ENCODE measurements at regions of chr6 and their contacts with region 1.

Region 1: GRCh38 chr6:159174263-159174969 is 5.2 kb downstream of the FNDC1 start:
- DNase-seq: peak; percentile 18
- H3K4me3 ChIP-seq: no peak overlapping the region
- H3K27ac ChIP-seq: no peak overlapping the region
- H3K27me3 ChIP-seq: peaks cover 31% of the 10 kb centered on the region
- CTCF ChIP-seq: peak; percentile 99

Region 2: DNA sequence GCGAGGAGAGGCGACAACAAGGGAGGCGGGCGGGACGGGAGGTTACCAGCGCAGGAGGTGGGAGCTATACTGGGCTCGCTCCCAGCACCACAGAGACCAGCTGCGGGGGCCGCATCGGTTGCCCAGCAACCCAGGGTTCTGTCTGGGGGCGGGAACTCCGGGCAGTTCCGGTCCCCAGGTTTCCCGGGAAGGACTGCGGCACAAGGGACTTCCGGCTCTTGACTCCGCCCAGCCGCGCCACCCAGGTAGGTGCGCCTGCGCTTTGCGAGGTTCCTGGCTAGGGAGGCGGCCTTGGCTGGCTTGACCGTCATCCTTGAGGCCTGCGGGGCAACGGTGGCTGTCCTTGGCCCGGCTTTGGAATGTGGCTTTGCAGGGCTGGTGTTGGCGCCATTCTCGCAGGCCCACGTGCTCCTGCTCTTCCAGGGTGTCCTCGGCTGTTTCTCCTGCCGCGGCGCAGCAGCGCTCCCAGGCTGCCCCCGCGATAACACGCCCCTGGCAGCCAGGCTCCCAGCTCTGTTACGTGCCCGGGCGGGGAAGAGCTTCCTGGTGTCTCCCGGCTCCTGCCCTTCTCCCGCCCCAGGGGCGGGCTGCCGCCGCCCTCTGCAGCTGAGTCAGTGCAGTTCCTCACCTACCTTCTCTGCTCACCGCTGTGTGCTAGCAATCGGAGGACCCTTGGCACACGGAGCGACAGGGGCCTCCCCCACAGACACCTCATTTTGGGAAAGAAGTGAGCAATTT is 174.6 kb before region 1 on chr6 and contains the start of gene RSPH3:
- CTCF ChIA-PET with region 1: no interaction called
- POLR2A ChIA-PET with region 1: no interaction called
- DNase-seq: peak; percentile 72
- H3K4me3 ChIP-seq: peak within 1 kb of the TSS; percentile 95
- H3K27ac ChIP-seq: peak within 1 kb of the TSS; percentile 82
- H3K27me3 ChIP-seq: no peaks in the 10 kb centered on the region
- CTCF ChIP-seq: no peak
- polyA plus RNA-seq, gene RSPH3: 1.6 and 2.0 TPM in 2 replicates

Region 3: GRCh38 chr6:159184559-159184958 is 10.1 kb after region 1 on chr6:
- CTCF ChIA-PET with region 1: interaction called, 17 read pairs
- POLR2A ChIA-PET with region 1: no interaction called
- DNase-seq: no peak
- H3K4me3 ChIP-seq: no peak overlapping the region
- H3K27ac ChIP-seq: no peak overlapping the region
- H3K27me3 ChIP-seq: no peaks in the 10 kb centered on the region
- CTCF ChIP-seq: no peak

Region 4: DNA sequence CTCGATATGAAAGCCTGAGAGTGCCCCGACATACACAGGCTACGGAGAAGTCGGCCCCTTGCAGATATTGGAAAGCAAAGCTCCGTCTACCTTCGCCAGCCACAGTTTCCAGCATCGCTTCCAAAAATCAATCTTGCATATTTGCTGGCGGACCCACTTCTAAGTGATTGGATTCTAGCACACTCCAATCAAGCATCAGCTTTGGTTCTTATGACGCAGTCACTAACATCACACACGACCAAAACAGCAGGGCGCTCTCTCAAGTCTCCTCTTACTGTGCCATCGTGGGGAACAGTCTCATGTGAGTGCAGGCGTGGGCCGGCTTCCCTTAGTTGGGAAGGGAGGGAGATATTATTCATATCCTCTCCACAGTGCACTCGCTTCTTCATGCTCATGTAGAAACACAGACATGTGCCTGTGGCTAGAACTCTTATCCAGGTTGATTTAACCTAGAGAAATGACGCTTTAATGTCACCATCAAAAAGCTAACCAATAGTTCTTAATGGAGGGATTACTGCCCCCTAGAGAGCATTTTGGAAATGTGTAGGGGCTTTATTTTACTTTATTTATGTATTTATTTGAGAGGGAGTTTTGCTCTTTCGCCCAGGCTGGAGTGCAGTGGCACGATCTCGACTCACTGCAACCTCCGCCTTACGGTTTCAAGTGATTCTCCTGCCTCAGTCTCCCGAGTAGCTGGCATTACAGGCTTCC is 288.9 kb after region 1 on chr6:
- CTCF ChIA-PET with region 1: interaction called, 11 read pairs
- POLR2A ChIA-PET with region 1: no interaction called
- DNase-seq: no peak
- H3K4me3 ChIP-seq: no peak overlapping the region
- H3K27ac ChIP-seq: no peak overlapping the region
- H3K27me3 ChIP-seq: no peaks in the 10 kb centered on the region
- CTCF ChIP-seq: no peak

Region 5: DNA sequence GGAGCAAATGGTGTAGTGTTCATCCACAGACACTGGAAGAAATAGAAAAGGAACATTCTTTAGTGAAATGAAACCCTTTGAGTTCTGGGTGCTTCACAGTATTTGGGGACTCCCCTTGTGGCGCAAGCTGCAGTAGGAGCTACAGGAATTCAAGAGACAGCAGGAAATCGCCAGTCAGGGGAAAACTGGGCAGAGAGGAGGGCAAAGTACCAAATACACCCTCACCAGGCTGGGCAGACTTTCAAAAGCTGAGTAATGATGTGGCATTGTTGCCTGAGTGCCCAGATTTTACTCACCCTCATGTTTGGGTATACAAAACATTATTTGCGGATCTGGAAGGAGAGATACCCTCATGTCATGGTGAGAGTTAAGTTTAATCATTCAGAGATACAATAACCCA is 420.8 kb after region 1 on chr6:
- CTCF ChIA-PET with region 1: interaction called, 11 read pairs
- POLR2A ChIA-PET with region 1: no interaction called
- DNase-seq: no peak
- H3K4me3 ChIP-seq: peak overlapping the region; percentile 21
- H3K27ac ChIP-seq: peak overlapping the region; percentile 85
- H3K27me3 ChIP-seq: no peaks in the 10 kb centered on the region
- CTCF ChIP-seq: no peak; the same call in 1 of the 2 replicates

Region 6: GRCh38 chr6:159633196-159633595 is 458.8 kb after region 1 on chr6:
- CTCF ChIA-PET with region 1: interaction called, 11 read pairs
- POLR2A ChIA-PET with region 1: no interaction called
- DNase-seq: no peak
- H3K4me3 ChIP-seq: no peak overlapping the region
- H3K27ac ChIP-seq: no peak overlapping the region
- H3K27me3 ChIP-seq: no peaks in the 10 kb centered on the region
- CTCF ChIP-seq: peak; percentile 65